ENCODE measurements at regions of chr7 and their contacts with region 1.

Region 1: DNA sequence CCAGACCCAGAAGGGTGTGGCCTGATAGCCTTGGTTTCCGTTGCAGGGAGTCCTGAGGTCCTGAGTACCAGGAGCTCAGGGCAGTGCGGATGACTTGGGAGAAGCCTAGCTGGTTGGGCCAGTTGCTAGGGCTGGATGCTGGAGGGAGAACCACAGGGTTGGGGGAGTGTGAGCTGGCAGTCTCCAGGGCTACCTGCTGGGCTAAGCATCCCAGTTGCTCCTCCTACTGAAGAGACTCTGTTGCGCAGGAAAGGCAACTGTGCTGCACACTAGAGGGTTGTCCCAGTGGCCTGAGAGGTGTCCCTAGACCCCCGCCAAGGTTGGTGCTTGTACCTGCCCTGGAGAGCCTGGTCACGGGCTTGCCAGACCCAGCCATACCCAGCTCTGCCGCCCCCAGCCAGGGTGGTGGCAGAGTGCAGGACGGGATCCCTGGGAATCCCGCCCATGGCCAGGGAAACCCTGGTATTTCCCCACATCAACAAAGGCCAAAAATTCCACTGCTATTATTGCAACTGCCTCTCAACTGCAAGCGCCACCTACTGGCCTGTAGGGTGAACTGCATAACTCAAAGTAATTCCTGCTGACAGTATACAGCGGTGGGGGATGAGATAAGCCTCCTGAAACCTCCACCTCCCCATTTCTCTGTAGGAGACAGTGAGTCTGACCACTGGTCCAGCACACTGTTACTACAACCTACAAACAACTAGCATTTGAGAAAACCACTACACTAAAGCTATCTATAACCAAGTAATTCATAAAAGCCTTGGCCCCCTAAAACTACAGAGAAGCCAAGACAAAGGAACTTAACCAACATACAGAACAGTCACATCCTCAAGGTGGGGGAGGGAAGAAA is 67.6 kb upstream of the DDC start:
- DNase-seq: peak; percentile 31 to 77 (median 58)
- ATAC-seq: peak; percentile 83
- H3K4me3 ChIP-seq: no peak overlapping the region
- H3K4me3 Mint-ChIP-seq: no peak overlapping the region
- H3K27ac ChIP-seq: no peak overlapping the region
- H3K27ac Mint-ChIP-seq: no peak overlapping the region
- H3K4me1 ChIP-seq: no peaks in the 10 kb centered on the region
- H3K4me1 Mint-ChIP-seq: no peaks in the 10 kb centered on the region
- H3K27me3 ChIP-seq: no peaks in the 10 kb centered on the region
- H3K27me3 Mint-ChIP-seq: peaks cover 13% of the 10 kb centered on the region
- CTCF ChIP-seq: peak; percentile 92

Region 2: DNA sequence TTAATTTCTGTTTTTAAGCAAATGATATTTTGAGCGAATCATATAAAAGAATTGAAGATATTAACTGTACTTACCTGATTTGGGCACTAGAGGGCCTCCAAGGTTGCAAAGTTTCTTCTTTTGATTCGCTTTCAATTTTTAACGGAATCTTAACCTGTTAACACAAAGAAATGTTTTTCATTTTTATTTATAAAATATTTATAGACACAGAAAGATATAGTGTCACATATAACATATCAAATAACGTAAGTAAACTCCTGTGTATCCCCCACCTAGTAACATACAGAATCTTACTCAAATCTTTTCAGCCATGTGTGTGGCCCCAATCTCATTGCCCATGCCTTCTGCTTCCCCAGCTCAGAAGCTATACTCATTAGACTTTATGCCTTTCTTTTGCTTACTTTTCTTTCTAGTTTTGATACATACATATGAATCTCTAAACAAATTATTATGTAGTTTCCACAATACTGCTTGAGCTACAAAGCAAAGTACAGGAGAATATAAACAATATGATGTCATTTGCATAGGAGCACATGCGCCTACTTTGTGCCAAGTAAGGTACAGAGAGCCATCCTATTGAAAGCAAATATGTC is 490.3 kb before region 1 on chr7:
- CTCF ChIA-PET with region 1: interaction called, 6 read pairs
- POLR2A ChIA-PET with region 1: no interaction called
- intact Hi-C with region 1: loop called (anchors 5 kb)
- DNase-seq: peak in 4 of 9 experiments; percentile 38 to 78 (median 59)
- ATAC-seq: peak; percentile 85
- H3K4me3 ChIP-seq: no peak overlapping the region
- H3K4me3 Mint-ChIP-seq: peak overlapping the region; percentile 57
- H3K27ac ChIP-seq: no peak overlapping the region
- H3K27ac Mint-ChIP-seq: peak overlapping the region; percentile 84
- H3K4me1 ChIP-seq: peaks cover 5% of the 10 kb centered on the region
- H3K4me1 Mint-ChIP-seq: peaks cover 15% of the 10 kb centered on the region
- H3K27me3 ChIP-seq: no peaks in the 10 kb centered on the region
- H3K27me3 Mint-ChIP-seq: no peaks in the 10 kb centered on the region
- CTCF ChIP-seq: peak; percentile 91

Region 3: GRCh38 chr7:50552921-50553320 is 79.9 kb before region 1 on chr7:
- CTCF ChIA-PET with region 1: no interaction called
- POLR2A ChIA-PET with region 1: no interaction called
- intact Hi-C with region 1: loop called in 1 of 2 experiments (anchors 10 kb)
- DNase-seq: peak in 1 of 9 experiments; percentile 34
- ATAC-seq: no peak
- H3K4me3 ChIP-seq: no peak overlapping the region
- H3K4me3 Mint-ChIP-seq: no peak overlapping the region
- H3K27ac ChIP-seq: no peak overlapping the region
- H3K27ac Mint-ChIP-seq: no peak overlapping the region
- H3K4me1 ChIP-seq: no peaks in the 10 kb centered on the region
- H3K4me1 Mint-ChIP-seq: no peaks in the 10 kb centered on the region
- H3K27me3 ChIP-seq: no peaks in the 10 kb centered on the region
- H3K27me3 Mint-ChIP-seq: peaks cover 27% of the 10 kb centered on the region
- CTCF ChIP-seq: no peak

Region 4: GRCh38 chr7:50595491-50596102 is 37.2 kb before region 1 on chr7:
- CTCF ChIA-PET with region 1: interaction called, 9 read pairs
- POLR2A ChIA-PET with region 1: no interaction called
- intact Hi-C with region 1: loop called (anchors 1 to 2 kb)
- DNase-seq: peak in 2 of 9 experiments; percentile 36 to 56
- ATAC-seq: no peak
- H3K4me3 ChIP-seq: no peak overlapping the region
- H3K4me3 Mint-ChIP-seq: no peak overlapping the region
- H3K27ac ChIP-seq: no peak overlapping the region
- H3K27ac Mint-ChIP-seq: no peak overlapping the region
- H3K4me1 ChIP-seq: no peaks in the 10 kb centered on the region
- H3K4me1 Mint-ChIP-seq: peaks cover 7% of the 10 kb centered on the region
- H3K27me3 ChIP-seq: no peaks in the 10 kb centered on the region
- H3K27me3 Mint-ChIP-seq: peaks cover 3% of the 10 kb centered on the region
- CTCF ChIP-seq: peak; percentile 30

Region 5: DNA sequence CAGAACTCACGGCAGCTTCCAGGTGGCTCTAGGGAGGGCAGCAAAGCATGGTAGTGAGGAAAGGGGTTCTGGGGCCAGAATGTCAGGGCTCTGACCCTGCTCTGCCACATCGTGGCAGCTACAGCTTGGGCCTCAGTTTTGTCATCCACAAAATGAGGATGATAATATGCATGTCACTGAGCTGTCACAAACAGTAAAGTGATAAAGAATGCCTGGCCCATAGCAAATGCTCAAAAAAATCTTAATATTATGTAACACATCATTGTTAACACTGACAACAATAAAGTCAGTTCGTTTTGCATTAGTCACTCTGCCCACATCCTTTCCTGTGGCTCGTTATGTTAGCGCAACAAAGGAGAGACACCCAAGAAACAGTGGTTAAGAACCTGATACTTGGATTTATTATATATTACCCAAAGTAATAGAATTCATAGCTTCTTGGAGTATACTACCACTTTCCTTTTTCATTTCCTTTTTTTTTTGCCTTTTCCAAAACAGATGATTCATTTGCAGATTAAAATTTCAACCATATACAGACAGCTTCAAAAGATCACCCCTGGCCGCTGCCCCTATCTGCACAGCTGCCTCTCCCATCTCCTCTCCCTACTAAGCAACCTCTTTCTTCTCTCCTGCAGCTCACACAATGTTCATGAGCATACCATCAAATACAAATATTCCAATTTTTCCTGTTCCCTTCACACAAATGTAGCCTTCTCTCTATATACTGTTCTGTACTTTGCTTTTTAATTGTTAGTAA is 22.1 kb before region 1 on chr7:
- CTCF ChIA-PET with region 1: interaction called, 89 read pairs
- POLR2A ChIA-PET with region 1: no interaction called
- intact Hi-C with region 1: loop called in 1 of 2 experiments (anchors 2 kb)
- DNase-seq: peak; percentile 17 to 81 (median 60)
- ATAC-seq: peak; percentile 84
- H3K4me3 ChIP-seq: no peak overlapping the region
- H3K4me3 Mint-ChIP-seq: peak overlapping the region; percentile 21
- H3K27ac ChIP-seq: peak overlapping the region; percentile 39 to 53
- H3K27ac Mint-ChIP-seq: peak overlapping the region; percentile 68
- H3K4me1 ChIP-seq: peaks cover 18% of the 10 kb centered on the region
- H3K4me1 Mint-ChIP-seq: peaks cover 39% of the 10 kb centered on the region
- H3K27me3 ChIP-seq: no peaks in the 10 kb centered on the region
- H3K27me3 Mint-ChIP-seq: no peaks in the 10 kb centered on the region
- CTCF ChIP-seq: no peak

Region 6: GRCh38 chr7:50661345-50662040 is 28.7 kb after region 1 on chr7:
- CTCF ChIA-PET with region 1: interaction called, 14 read pairs
- POLR2A ChIA-PET with region 1: no interaction called
- intact Hi-C with region 1: no loop called
- DNase-seq: peak in 5 of 9 experiments; percentile 20 to 64 (median 37)
- ATAC-seq: no peak
- H3K4me3 ChIP-seq: no peak overlapping the region
- H3K4me3 Mint-ChIP-seq: peak overlapping the region; percentile 55
- H3K27ac ChIP-seq: peak overlapping the region in 1 of 2 experiments; percentile 57
- H3K27ac Mint-ChIP-seq: peak overlapping the region; percentile 79
- H3K4me1 ChIP-seq: peaks cover 42% of the 10 kb centered on the region
- H3K4me1 Mint-ChIP-seq: peaks cover 49% of the 10 kb centered on the region
- H3K27me3 ChIP-seq: no peaks in the 10 kb centered on the region
- H3K27me3 Mint-ChIP-seq: no peaks in the 10 kb centered on the region
- CTCF ChIP-seq: no peak

Region 7: GRCh38 chr7:50679218-50680007 is 46.6 kb after region 1 on chr7:
- CTCF ChIA-PET with region 1: interaction called, 13 read pairs
- POLR2A ChIA-PET with region 1: no interaction called
- intact Hi-C with region 1: loop called in 1 of 2 experiments (anchors 2 kb)
- DNase-seq: peak in 2 of 9 experiments; percentile 63 to 75
- ATAC-seq: peak; percentile 67
- H3K4me3 ChIP-seq: no peak overlapping the region
- H3K4me3 Mint-ChIP-seq: no peak overlapping the region
- H3K27ac ChIP-seq: no peak overlapping the region
- H3K27ac Mint-ChIP-seq: no peak overlapping the region
- H3K4me1 ChIP-seq: no peaks in the 10 kb centered on the region
- H3K4me1 Mint-ChIP-seq: peaks cover 2% of the 10 kb centered on the region
- H3K27me3 ChIP-seq: no peaks in the 10 kb centered on the region
- H3K27me3 Mint-ChIP-seq: peaks cover 5% of the 10 kb centered on the region
- CTCF ChIP-seq: peak; percentile 68